Panc1 (cell line): ENCODE measurements at regions of chr12 and their contacts with region 1.

Region 1: GRCh38 chr12:71392521-71393145 is 47.0 kb upstream of the LGR5 start:
- DNase-seq: peak; percentile 42
- ATAC-seq: peak; percentile 63; the same call in 1 of the 2 replicates
- H3K4me3 ChIP-seq: no peak overlapping the region
- H3K27ac ChIP-seq: peak overlapping the region; percentile 36; the same call in 1 of the 2 replicates
- H3K4me1 ChIP-seq: no peaks in the 10 kb centered on the region; the same call in 1 of the 2 replicates
- H3K27me3 ChIP-seq: no peaks in the 10 kb centered on the region
- CTCF ChIP-seq: peak; percentile 85

Region 2: DNA sequence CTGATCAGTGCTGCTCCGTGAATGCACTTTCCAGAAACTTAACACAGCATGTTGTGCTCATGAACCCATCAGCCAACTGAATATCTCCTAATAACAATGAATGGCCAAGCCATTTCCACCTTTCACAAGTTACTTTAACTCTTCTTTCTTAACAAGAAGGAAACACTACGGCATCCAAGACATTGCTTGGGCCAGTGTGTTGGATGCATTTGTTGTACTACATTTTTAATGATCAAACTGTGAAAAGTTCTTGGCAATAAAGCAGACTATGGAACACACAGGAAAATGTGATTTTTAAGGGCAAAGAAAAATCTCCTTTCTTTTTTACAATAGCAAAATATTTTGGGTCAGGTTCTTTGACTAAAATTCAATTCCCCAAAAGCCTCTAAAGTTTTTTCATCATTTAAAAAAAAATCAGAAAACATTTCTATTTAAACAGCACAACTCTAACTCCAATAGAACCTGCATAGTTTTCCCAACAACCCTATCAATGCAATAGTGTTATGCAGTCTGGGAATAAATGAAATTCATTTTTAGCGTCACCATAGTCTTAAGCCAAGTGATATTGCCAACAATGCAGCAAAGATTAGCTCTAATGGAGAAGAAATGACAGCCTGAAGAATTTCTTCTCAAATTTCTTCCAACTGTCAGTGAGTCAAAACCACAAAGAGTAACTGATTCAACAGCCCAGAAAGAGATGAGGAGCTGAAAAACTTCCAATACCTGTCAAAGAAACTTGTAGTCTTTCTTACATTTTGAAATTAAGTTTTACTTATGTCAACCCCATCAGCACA is 421.4 kb before region 1 on chr12:
- CTCF ChIA-PET with region 1: no interaction called
- POLR2A ChIA-PET with region 1: no interaction called
- in situ Hi-C with region 1: no loop called
- intact Hi-C with region 1: no loop called
- DNase-seq: no peak
- ATAC-seq: no peak
- H3K4me3 ChIP-seq: no peak overlapping the region
- H3K27ac ChIP-seq: no peak overlapping the region
- H3K4me1 ChIP-seq: no peaks in the 10 kb centered on the region
- H3K27me3 ChIP-seq: no peaks in the 10 kb centered on the region
- CTCF ChIP-seq: no peak

Region 3: GRCh38 chr12:71216725-71217579 is 175.7 kb before region 1 on chr12:
- CTCF ChIA-PET with region 1: no interaction called
- POLR2A ChIA-PET with region 1: no interaction called
- in situ Hi-C with region 1: no loop called
- intact Hi-C with region 1: loop called (anchors 5 kb)
- DNase-seq: peak; percentile 4
- ATAC-seq: no peak
- H3K4me3 ChIP-seq: no peak overlapping the region
- H3K27ac ChIP-seq: peak overlapping the region; percentile 25; the same call in 1 of the 2 replicates
- H3K4me1 ChIP-seq: no peaks in the 10 kb centered on the region; the same call in 1 of the 2 replicates
- H3K27me3 ChIP-seq: no peaks in the 10 kb centered on the region
- CTCF ChIP-seq: peak; percentile 68

Region 4: GRCh38 chr12:71335151-71335962 is 57.3 kb before region 1 on chr12:
- CTCF ChIA-PET with region 1: no interaction called
- POLR2A ChIA-PET with region 1: no interaction called
- in situ Hi-C with region 1: no loop called
- intact Hi-C with region 1: no loop called
- DNase-seq: no peak
- ATAC-seq: no peak
- H3K4me3 ChIP-seq: no peak overlapping the region
- H3K27ac ChIP-seq: no peak overlapping the region
- H3K4me1 ChIP-seq: no peaks in the 10 kb centered on the region
- H3K27me3 ChIP-seq: no peaks in the 10 kb centered on the region
- CTCF ChIP-seq: no peak

Region 5: GRCh38 chr12:71407732-71408131 is 15.1 kb after region 1 on chr12:
- CTCF ChIA-PET with region 1: no interaction called
- POLR2A ChIA-PET with region 1: no interaction called
- in situ Hi-C with region 1: no loop called
- intact Hi-C with region 1: no loop called
- DNase-seq: no peak
- ATAC-seq: no peak
- H3K4me3 ChIP-seq: no peak overlapping the region
- H3K27ac ChIP-seq: no peak overlapping the region
- H3K4me1 ChIP-seq: no peaks in the 10 kb centered on the region
- H3K27me3 ChIP-seq: no peaks in the 10 kb centered on the region
- CTCF ChIP-seq: no peak